ENCODE measurements at regions of chr6 and their contacts with region 1.

Region 1: DNA sequence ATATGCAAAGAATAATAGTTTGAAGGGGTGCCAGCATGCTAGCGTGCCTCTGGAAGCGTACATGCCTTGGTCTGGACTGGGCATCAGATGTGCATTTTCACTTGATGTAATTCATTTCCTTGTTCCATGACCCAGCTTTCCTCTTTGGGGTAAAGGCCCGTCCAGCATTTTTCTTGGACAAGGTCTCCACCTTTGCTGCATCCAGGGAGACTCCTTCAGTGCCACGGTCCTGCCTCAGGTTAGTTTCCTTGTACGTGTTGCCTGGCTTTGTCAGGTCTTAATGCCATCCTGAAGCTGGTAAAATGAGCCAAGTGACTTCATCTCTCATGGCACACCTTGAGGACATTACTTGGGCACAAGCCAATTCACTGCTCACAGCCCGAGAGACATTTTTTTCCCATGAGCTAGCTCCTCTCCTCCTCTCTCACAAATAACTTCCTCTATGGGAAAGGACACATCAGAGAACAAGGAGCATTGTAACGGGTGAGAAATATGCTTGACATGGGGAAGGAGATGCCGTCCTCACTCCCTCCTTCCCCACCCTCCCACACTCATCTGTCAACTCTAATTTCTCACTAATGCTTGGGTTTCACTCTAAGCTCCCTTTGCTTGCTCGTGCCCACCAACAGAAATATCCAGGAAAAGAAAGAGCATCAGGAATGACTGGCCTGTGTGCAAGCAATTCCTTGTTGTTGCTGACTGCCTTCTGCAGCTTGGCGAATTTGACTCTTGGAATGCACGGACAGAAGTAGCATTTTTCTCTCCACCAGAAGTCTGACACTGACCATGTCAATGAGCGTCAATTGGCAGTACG is 24.0 kb downstream of the EDN1 start:
- DNase-seq: peak; percentile 59
- ATAC-seq: peak; percentile 80
- H3K4me3 ChIP-seq: peak overlapping the region; percentile 16 to 45
- H3K27ac ChIP-seq: peak overlapping the region; percentile 90
- H3K4me1 ChIP-seq: peaks cover 27% of the 10 kb centered on the region
- H3K27me3 ChIP-seq: no peaks in the 10 kb centered on the region
- CTCF ChIP-seq: no peak

Region 2: GRCh38 chr6:11989386-11989785 is 324.8 kb before region 1 on chr6:
- CTCF ChIA-PET with region 1: no interaction called
- POLR2A ChIA-PET with region 1: no interaction called
- in situ Hi-C with region 1: no loop called
- intact Hi-C with region 1: no loop called
- DNase-seq: no peak
- ATAC-seq: no peak
- H3K4me3 ChIP-seq: no peak overlapping the region
- H3K27ac ChIP-seq: no peak overlapping the region
- H3K4me1 ChIP-seq: no peaks in the 10 kb centered on the region
- H3K27me3 ChIP-seq: no peaks in the 10 kb centered on the region
- CTCF ChIP-seq: no peak

Region 3: DNA sequence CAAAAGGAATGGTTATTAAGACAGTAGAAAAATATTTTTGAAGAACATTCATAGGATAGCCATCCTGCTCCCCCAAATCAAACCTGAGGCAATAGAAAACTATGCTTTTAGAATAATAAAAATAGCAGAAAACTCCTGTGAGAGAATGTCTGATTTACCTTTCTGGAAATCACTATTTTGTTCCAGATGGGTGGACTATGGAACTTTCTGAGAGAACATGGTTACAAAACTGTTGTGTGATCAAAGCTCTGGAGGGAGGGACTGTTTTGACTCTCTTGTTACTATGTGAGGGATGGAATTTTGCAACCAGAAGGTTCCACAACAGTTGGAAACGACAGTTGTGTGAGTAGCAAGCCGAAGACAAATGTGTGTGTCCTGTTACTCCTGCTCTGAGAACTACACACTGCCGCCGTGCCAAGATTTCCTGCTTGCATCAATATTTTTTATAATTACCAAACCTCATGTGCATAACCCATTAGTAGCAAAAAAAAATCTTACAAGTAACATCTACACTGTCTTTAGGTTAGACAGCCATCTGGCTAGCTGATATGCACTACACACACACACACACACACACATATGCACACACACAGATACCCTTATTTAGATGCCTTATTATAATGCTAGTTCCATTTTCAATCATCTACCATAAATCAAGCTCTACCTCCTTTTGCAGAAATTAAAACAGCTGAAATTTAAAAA is 313.0 kb before region 1 on chr6:
- CTCF ChIA-PET with region 1: no interaction called
- POLR2A ChIA-PET with region 1: no interaction called
- in situ Hi-C with region 1: no loop called
- intact Hi-C with region 1: no loop called
- DNase-seq: no peak
- ATAC-seq: no peak
- H3K4me3 ChIP-seq: no peak overlapping the region
- H3K27ac ChIP-seq: no peak overlapping the region
- H3K4me1 ChIP-seq: no peaks in the 10 kb centered on the region
- H3K27me3 ChIP-seq: peaks cover 4% of the 10 kb centered on the region; the same call in 1 of the 2 replicates
- CTCF ChIP-seq: no peak

Region 4: GRCh38 chr6:12490904-12491571 is 176.8 kb after region 1 on chr6:
- CTCF ChIA-PET with region 1: no interaction called
- POLR2A ChIA-PET with region 1: no interaction called
- in situ Hi-C with region 1: no loop called
- intact Hi-C with region 1: loop called (anchors 10 kb)
- DNase-seq: no peak
- ATAC-seq: no peak
- H3K4me3 ChIP-seq: no peak overlapping the region
- H3K27ac ChIP-seq: peak overlapping the region; percentile 58
- H3K4me1 ChIP-seq: no peaks in the 10 kb centered on the region; the same call in 1 of the 2 replicates
- H3K27me3 ChIP-seq: no peaks in the 10 kb centered on the region
- CTCF ChIP-seq: no peak